Posterior vena cava (tissue), 2 donors: ENCODE measurements at regions of chr9 and their contacts with region 1.

Region 1: GRCh38 chr9:21889673-21890072 is 87.2 kb downstream of the MTAP start:
- DNase-seq: no peak

Region 2: DNA sequence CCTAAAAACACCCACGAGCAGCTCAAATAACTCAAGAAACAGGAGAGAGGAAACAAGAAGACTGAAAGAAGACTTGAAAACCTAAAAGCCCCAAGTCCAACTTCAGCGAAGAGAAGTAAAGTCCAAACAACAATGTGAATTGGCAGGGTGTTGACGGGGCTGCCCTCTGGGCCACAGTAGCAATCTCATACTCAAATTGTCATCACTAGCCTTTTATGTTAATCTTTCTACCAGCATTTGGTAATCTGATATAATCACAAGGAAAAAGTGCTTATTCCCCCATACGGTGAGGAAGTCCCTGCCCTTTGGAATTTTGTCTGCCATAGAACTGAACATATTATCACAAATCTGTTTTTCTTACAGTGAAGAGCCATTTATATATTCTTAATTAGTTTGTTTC is 356.1 kb before region 1 on chr9:
- intact Hi-C with region 1: loop called in 1 of 2 experiments (anchors 10 kb)
- DNase-seq: no peak

Region 3: GRCh38 chr9:21840647-21841046 is 49.0 kb before region 1 on chr9:
- intact Hi-C with region 1: loop called in 1 of 2 experiments (anchors 10 kb)
- DNase-seq: no peak